Activated T-helper 2 cell treated with anti-CD3 and anti-CD28 coated beads, Interferon-gamma antibody, Interleukin-2, Interleukin-4, amounts not matched to agents 10 μg/mL and 5 μg/mL and 100 μg/mL, durations not matched to agents 14 hours and 24 hours and 36 hours (primary cell): ENCODE measurements at regions of chr5 and their contacts with region 1.

Region 1: GRCh38 chr5:179806250-179807222 is at the start of gene MGAT4B:
- DNase-seq: peak; percentile 65
- H3K4me3 Mint-ChIP-seq: peak within 1 kb of the TSS; percentile 77
- H3K27ac Mint-ChIP-seq: peak within 1 kb of the TSS; percentile 72
- H3K4me1 Mint-ChIP-seq: peaks cover 30% of the 10 kb centered on the region
- H3K27me3 Mint-ChIP-seq: no peaks in the 10 kb centered on the region
- total RNA-seq, gene MGAT4B: 135 and 139 TPM in 2 replicates

Region 2: DNA sequence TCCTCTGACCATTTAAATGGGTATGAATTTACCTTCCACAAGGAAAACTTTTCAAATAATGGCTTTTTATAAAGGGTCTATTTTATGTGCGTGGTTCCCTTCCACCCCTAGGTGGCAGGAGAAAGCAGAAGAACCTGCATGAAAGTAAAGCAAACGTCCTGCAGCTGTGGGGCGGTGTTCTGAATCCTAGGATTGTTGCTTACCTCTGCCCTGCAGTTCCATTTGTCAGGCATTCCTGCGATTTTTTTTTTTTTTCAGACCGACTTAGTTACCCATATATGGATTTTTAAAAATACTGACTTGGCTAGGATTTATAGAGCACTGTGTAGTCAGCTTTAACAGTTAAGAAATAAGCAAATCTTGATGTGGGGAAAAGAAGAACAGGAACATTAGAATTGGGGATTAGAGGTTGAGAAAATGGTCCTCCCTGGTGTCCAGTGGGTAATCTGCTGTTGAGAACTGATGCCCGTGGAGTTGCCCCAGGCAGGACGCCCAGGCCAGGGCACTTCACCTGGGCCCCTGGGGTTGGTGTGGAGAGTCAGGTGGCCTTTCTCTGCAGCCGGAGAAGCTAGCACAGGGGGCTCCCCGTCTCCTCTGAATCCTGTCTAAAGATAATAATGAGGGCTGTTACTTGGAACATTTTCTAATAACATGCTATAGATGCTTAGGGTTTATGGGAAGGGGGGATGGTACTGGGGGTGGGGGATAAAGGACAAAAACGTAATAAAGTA is 43.2 kb before region 1 on chr5:
- intact Hi-C with region 1: loop called (anchors 5 kb)
- DNase-seq: peak; percentile 21
- H3K4me3 Mint-ChIP-seq: no peak overlapping the region
- H3K27ac Mint-ChIP-seq: peak overlapping the region; percentile 56
- H3K4me1 Mint-ChIP-seq: peaks cover 46% of the 10 kb centered on the region
- H3K27me3 Mint-ChIP-seq: no peaks in the 10 kb centered on the region

Region 3: GRCh38 chr5:179821581-179822432 is 15.3 kb after region 1 on chr5:
- intact Hi-C with region 1: loop called (anchors 1 kb)
- DNase-seq: peak; percentile 83
- H3K4me3 Mint-ChIP-seq: peak overlapping the region; percentile 91
- H3K27ac Mint-ChIP-seq: peak overlapping the region; percentile 93
- H3K4me1 Mint-ChIP-seq: peaks cover 31% of the 10 kb centered on the region
- H3K27me3 Mint-ChIP-seq: no peaks in the 10 kb centered on the region

Region 4: DNA sequence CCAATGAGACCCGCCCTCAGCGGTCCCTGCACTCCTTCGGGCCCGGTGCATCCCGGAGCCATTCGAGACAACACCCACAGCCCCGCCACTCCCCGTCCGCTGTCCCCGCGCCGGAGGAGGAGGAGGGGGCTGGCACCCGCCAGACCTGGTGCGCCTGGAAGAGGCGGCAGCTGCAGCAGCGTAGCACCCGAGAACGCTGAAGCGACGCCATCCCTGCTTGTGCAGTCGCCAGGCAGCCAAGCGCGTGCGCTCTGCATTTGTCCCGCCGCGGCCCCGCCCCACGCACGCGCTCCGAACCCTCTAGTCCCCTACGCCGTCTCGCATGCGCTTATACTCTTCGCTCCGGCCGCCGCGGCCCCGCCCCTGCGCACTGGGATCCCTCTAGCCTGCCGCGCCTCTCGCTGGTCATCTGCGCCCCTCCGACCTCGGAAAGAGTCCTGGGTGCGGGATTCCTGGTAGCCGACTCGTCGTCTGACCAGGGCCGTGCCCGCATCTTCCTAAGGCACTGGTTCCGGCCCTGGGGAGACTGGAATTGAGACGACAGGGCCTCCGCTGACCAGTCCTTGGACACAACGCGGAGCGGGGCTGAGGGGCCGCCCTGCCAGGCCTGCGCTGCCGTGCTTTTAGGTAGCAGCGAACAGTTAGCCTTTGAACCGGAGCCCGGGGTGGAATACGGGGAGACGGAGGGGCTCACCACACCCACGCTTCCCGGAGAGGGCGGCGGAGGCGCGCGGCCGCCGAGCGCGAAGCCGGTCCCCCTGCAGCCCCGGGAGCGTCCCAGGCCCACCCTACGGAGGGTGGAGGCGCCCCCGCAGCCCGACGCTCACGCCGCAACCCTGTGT is 52.3 kb after region 1 on chr5 and contains the start of gene MRNIP:
- intact Hi-C with region 1: loop called (anchors 1 kb)
- DNase-seq: peak; percentile 86
- H3K4me3 Mint-ChIP-seq: peak within 1 kb of the TSS; percentile 96
- H3K27ac Mint-ChIP-seq: peak within 1 kb of the TSS; percentile 74
- H3K4me1 Mint-ChIP-seq: peaks cover 9% of the 10 kb centered on the region
- H3K27me3 Mint-ChIP-seq: no peaks in the 10 kb centered on the region
- total RNA-seq, gene MRNIP: 24.4 and 30.1 TPM in 2 replicates

Region 5: GRCh38 chr5:180639741-180640610 is 833.4 kb after region 1 on chr5:
- intact Hi-C with region 1: no loop called
- DNase-seq: no peak
- H3K4me3 Mint-ChIP-seq: no peak overlapping the region
- H3K27ac Mint-ChIP-seq: no peak overlapping the region
- H3K4me1 Mint-ChIP-seq: no peaks in the 10 kb centered on the region
- H3K27me3 Mint-ChIP-seq: peaks cover under 1% of the 10 kb centered on the region